Activated CD4-positive, alpha-beta memory T cell treated with anti-CD3 and anti-CD28 coated beads for 36 hours (primary cell): ENCODE measurements at regions of chr9 and their contacts with region 1.

Region 1: DNA sequence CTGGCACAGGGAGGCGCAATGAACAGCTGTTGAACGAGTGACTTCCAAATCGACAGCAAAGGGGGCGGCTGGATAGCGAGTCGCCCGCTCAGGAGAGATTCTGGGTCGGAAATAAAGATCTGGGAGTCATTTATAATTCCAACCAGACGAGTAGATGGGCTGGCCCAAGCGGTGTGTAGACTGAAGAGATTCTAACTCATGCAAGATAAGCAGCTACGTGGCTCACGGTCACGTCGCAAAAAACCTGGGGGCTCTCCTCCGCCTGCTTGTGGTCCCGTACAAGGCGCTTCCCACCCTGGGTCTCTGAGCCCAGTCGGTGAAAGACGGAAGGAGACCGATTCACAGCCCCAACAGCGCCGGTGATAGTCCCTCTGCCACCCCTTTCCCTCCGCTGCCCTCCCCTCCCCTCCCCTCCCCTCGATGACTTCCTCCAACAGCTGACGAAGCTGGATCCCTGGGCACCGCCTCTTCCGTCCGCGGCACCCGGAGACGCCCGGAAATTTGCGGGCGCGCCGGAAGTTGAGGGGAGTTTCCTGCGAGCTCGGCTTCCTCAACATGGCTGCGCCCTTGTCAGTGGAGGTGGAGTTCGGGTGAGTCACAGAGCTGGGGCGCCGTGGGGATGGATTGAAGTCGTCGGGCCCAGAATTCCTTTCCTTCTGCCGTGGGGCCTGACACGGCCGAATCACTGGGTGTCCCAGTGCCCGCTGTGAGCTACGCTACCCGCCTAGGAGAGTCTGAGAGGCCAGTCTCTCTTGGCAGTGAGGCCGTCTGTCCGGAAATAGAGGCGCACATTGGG is at the start of gene URM1:
- DNase-seq: peak; percentile 98
- H3K4me3 Mint-ChIP-seq: peak within 1 kb of the TSS; percentile 99
- H3K27ac Mint-ChIP-seq: peak within 1 kb of the TSS; percentile 93
- H3K4me1 Mint-ChIP-seq: peaks cover 27% of the 10 kb centered on the region
- H3K27me3 Mint-ChIP-seq: no peaks in the 10 kb centered on the region
- total RNA-seq, gene URM1: 45.9 to 50.0 TPM

Region 2: GRCh38 chr9:128296337-128297220 is 74.4 kb before region 1 on chr9:
- CTCF ChIA-PET with region 1: interaction called, 12 read pairs
- POLR2A ChIA-PET with region 1: no interaction called
- intact Hi-C with region 1: no loop called
- DNase-seq: no peak
- H3K4me3 Mint-ChIP-seq: no peak overlapping the region
- H3K27ac Mint-ChIP-seq: no peak overlapping the region
- H3K4me1 Mint-ChIP-seq: no peaks in the 10 kb centered on the region
- H3K27me3 Mint-ChIP-seq: no peaks in the 10 kb centered on the region

Region 3: GRCh38 chr9:128339771-128340690 is 31.0 kb before region 1 on chr9 and contains the start of gene SLC27A4:
- CTCF ChIA-PET with region 1: interaction called, 18 read pairs
- POLR2A ChIA-PET with region 1: interaction called, 3 read pairs
- intact Hi-C with region 1: loop called (anchors 2 kb)
- DNase-seq: peak; percentile 84
- H3K4me3 Mint-ChIP-seq: peak within 1 kb of the TSS; percentile 90
- H3K27ac Mint-ChIP-seq: peak within 1 kb of the TSS; percentile 76
- H3K4me1 Mint-ChIP-seq: peaks cover 5% of the 10 kb centered on the region
- H3K27me3 Mint-ChIP-seq: no peaks in the 10 kb centered on the region
- total RNA-seq, gene SLC27A4: 12.6 to 14.1 TPM

Region 4: GRCh38 chr9:128504485-128505413 is 133.7 kb after region 1 on chr9 and contains the start of gene GLE1:
- CTCF ChIA-PET with region 1: no interaction called
- POLR2A ChIA-PET with region 1: no interaction called
- intact Hi-C with region 1: loop called (anchors 1 kb)
- DNase-seq: peak; percentile 97
- H3K4me3 Mint-ChIP-seq: peak within 1 kb of the TSS; percentile 99
- H3K27ac Mint-ChIP-seq: peak within 1 kb of the TSS; percentile 97
- H3K4me1 Mint-ChIP-seq: peaks cover 26% of the 10 kb centered on the region
- H3K27me3 Mint-ChIP-seq: no peaks in the 10 kb centered on the region
- total RNA-seq, gene GLE1: 55.6 to 57.0 TPM

Region 5: GRCh38 chr9:128902351-128903078 is 531.5 kb after region 1 on chr9:
- CTCF ChIA-PET with region 1: no interaction called
- POLR2A ChIA-PET with region 1: no interaction called
- intact Hi-C with region 1: loop called (anchors 2 kb)
- DNase-seq: peak; percentile 92
- H3K4me3 Mint-ChIP-seq: peak overlapping the region; percentile 48
- H3K27ac Mint-ChIP-seq: peak overlapping the region; percentile 83
- H3K4me1 Mint-ChIP-seq: peaks cover 62% of the 10 kb centered on the region
- H3K27me3 Mint-ChIP-seq: no peaks in the 10 kb centered on the region